ENCODE measurements at regions of chrX and their contacts with region 1.

Region 1: DNA sequence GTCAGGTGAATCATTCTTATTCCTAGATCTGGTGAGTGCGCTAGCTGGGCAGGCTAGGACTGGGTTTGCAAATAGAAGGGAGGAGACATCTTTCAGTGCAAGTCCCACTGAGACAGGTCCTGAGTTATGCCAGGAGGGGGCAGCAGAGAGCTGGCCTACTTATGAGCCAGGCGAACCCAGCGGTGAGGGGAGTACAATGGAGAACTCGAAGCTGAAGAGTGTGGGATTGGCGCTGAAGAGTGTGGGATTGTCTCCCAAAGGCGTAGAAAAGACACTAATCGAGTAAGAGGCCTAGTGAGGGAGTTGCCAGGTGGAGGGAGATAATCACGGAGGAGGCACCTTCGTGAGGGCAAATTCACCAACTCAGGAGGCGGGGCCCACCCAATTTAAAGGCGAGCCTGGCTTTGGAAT is 91.7 kb upstream of the CXorf66 start:
- DNase-seq: peak; percentile 10
- H3K4me3 Mint-ChIP-seq: no peak overlapping the region
- H3K27ac Mint-ChIP-seq: no peak overlapping the region
- H3K4me1 Mint-ChIP-seq: peaks cover 2% of the 10 kb centered on the region
- H3K27me3 Mint-ChIP-seq: no peaks in the 10 kb centered on the region

Region 2: DNA sequence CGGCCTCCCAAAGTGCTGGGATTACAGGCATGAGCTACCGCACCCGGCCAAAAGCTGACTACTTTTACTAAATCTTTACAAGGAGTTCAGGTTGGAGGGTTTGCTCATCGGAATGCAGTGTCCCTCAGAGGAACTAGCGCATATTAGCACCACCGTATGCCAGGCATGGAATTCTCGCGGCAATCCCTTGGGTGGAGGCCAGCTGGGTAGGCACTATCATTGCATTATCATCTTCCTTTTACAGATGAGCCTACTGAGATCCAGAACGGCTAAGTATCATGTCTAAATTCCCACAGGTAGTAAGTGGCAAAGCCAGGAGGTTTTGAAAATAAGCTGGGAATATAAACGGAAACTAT is 85.6 kb before region 1 on chrX:
- intact Hi-C with region 1: no loop called
- DNase-seq: no peak
- H3K4me3 Mint-ChIP-seq: no peak overlapping the region
- H3K27ac Mint-ChIP-seq: no peak overlapping the region
- H3K4me1 Mint-ChIP-seq: no peaks in the 10 kb centered on the region
- H3K27me3 Mint-ChIP-seq: peaks cover 13% of the 10 kb centered on the region

Region 3: GRCh38 chrX:140091125-140091886 is 34.3 kb after region 1 on chrX:
- intact Hi-C with region 1: no loop called
- DNase-seq: peak; percentile 8
- H3K4me3 Mint-ChIP-seq: peak overlapping the region; percentile 33
- H3K27ac Mint-ChIP-seq: no peak overlapping the region
- H3K4me1 Mint-ChIP-seq: peaks cover 2% of the 10 kb centered on the region
- H3K27me3 Mint-ChIP-seq: peaks cover 25% of the 10 kb centered on the region

Region 4: GRCh38 chrX:140141444-140142029 is 84.5 kb after region 1 on chrX:
- intact Hi-C with region 1: loop called (anchors 1 kb)
- DNase-seq: no peak
- H3K4me3 Mint-ChIP-seq: no peak overlapping the region
- H3K27ac Mint-ChIP-seq: no peak overlapping the region
- H3K4me1 Mint-ChIP-seq: no peaks in the 10 kb centered on the region
- H3K27me3 Mint-ChIP-seq: no peaks in the 10 kb centered on the region